ENCODE measurements at regions of chr6 and their contacts with region 1.

Region 1: GRCh38 chr6:87825821-87826221 is 123.8 kb upstream of the AKIRIN2 start:
- DNase-seq: peak; percentile 78
- ATAC-seq: peak; percentile 68
- H3K4me3 ChIP-seq: peak overlapping the region in 1 of 5 experiments; percentile 21
- H3K4me3 Mint-ChIP-seq: peak overlapping the region; percentile 9
- H3K27ac ChIP-seq: peak overlapping the region in 1 of 2 donors; percentile 62
- H3K27ac Mint-ChIP-seq: peak overlapping the region; percentile 8
- H3K4me1 ChIP-seq: peaks cover 17 to 19% of the 10 kb centered on the region in 2 donors
- H3K4me1 Mint-ChIP-seq: peaks cover 26% of the 10 kb centered on the region
- H3K27me3 ChIP-seq: no peaks in the 10 kb centered on the region
- H3K27me3 Mint-ChIP-seq: no peaks in the 10 kb centered on the region
- CTCF ChIP-seq: no peak

Region 2: GRCh38 chr6:86448398-86448797 is 1377.4 kb before region 1 on chr6:
- CTCF ChIA-PET with region 1: no interaction called
- POLR2A ChIA-PET with region 1: no interaction called
- intact Hi-C with region 1: no loop called
- DNase-seq: no peak
- ATAC-seq: no peak
- H3K4me3 ChIP-seq: no peak overlapping the region
- H3K4me3 Mint-ChIP-seq: no peak overlapping the region
- H3K27ac ChIP-seq: no peak overlapping the region
- H3K27ac Mint-ChIP-seq: no peak overlapping the region
- H3K4me1 ChIP-seq: no peaks in the 10 kb centered on the region
- H3K4me1 Mint-ChIP-seq: no peaks in the 10 kb centered on the region
- H3K27me3 ChIP-seq: no peaks in the 10 kb centered on the region
- H3K27me3 Mint-ChIP-seq: no peaks in the 10 kb centered on the region
- CTCF ChIP-seq: no peak

Region 3: DNA sequence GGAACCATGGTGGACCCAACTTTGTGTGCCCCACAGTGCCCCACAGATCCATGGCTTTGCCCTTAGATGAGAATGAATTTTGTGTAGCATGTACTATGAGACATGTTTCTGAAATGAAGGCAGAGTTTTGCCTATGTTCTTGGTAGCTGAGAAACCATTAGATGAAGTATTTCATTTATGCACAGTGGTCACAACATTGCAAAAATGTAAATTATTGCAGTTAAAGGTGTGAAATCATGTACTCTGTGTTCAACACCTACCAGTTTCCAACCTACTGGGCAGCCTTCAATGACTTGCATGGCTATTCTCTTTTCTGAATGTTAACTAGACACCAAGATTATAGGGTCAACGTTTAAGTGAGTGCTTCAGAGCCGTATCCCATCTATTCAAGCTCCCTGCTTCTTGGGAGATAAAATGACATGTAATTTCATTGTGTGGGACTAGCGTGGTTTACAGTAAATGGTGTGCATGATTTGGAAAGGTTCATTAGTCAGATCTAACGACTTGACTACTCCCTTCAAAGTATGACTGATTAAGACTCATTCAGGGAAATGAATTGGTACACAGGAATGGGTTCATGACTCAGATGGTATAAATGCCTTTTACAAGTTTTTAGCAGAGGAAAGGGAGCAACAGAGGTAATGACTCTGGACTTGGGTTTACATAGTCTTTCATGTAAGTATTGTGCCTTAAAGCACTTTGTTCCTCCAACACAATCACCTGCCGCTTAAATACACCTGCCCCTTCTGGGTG is 17.6 kb before region 1 on chr6:
- CTCF ChIA-PET with region 1: interaction called, 3 read pairs
- POLR2A ChIA-PET with region 1: no interaction called
- intact Hi-C with region 1: loop called (anchors 2 kb)
- DNase-seq: no peak
- ATAC-seq: no peak
- H3K4me3 ChIP-seq: no peak overlapping the region
- H3K4me3 Mint-ChIP-seq: no peak overlapping the region
- H3K27ac ChIP-seq: no peak overlapping the region
- H3K27ac Mint-ChIP-seq: no peak overlapping the region
- H3K4me1 ChIP-seq: peaks cover 18 to 29% of the 10 kb centered on the region in 2 donors
- H3K4me1 Mint-ChIP-seq: peaks cover 25% of the 10 kb centered on the region
- H3K27me3 ChIP-seq: no peaks in the 10 kb centered on the region
- H3K27me3 Mint-ChIP-seq: no peaks in the 10 kb centered on the region
- CTCF ChIP-seq: no peak

Region 4: GRCh38 chr6:88004707-88005106 is 178.9 kb after region 1 on chr6:
- CTCF ChIA-PET with region 1: no interaction called
- POLR2A ChIA-PET with region 1: no interaction called
- intact Hi-C with region 1: no loop called
- DNase-seq: no peak
- ATAC-seq: no peak
- H3K4me3 ChIP-seq: no peak overlapping the region
- H3K4me3 Mint-ChIP-seq: no peak overlapping the region
- H3K27ac ChIP-seq: no peak overlapping the region
- H3K27ac Mint-ChIP-seq: no peak overlapping the region
- H3K4me1 ChIP-seq: peaks cover 0 to 9% of the 10 kb centered on the region in 2 donors
- H3K4me1 Mint-ChIP-seq: peaks cover 3% of the 10 kb centered on the region
- H3K27me3 ChIP-seq: no peaks in the 10 kb centered on the region
- H3K27me3 Mint-ChIP-seq: peaks cover 8% of the 10 kb centered on the region
- CTCF ChIP-seq: no peak